HCT116 (cell line): ENCODE measurements at regions of chr2 and their contacts with region 1.

Region 1: DNA sequence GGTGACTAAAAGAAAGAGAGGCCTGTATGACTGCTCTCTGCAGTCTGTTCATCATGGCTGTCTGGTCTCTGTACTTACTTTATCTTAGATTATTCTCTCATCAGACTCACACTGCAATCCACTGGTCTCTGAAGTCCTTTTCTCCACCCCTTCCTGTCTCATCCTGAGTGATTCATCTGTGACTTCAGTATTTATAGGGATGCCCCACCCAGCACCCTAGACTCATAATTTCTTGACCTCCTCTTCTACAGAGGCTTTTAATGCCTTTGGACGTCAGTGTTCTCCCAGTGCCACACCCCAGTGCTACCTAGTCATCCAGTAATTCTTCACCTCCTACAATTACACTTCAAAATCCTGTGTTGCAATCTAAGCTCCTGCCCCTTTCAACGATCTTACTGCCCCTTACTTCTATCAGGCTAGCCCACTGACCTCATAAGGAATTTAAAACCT is 14.9 kb upstream of the ITPRID2 start:
- DNase-seq: peak; percentile 99
- ATAC-seq: peak; percentile 95
- H3K4me3 ChIP-seq: peak overlapping the region; percentile 6 to 21; a peak in 3 of 4 replicates
- H3K27ac ChIP-seq: peak overlapping the region; percentile 91
- H3K4me1 ChIP-seq: peaks cover 32 to 73% of the 10 kb centered on the region in 2 experiments
- H3K27me3 ChIP-seq: no peaks in the 10 kb centered on the region
- CTCF ChIP-seq: no peak
- POLR2A ChIP-seq: no peak
- RAD21 ChIP-seq: peak; percentile 43; the same call in 1 of the 2 replicates

Region 2: DNA sequence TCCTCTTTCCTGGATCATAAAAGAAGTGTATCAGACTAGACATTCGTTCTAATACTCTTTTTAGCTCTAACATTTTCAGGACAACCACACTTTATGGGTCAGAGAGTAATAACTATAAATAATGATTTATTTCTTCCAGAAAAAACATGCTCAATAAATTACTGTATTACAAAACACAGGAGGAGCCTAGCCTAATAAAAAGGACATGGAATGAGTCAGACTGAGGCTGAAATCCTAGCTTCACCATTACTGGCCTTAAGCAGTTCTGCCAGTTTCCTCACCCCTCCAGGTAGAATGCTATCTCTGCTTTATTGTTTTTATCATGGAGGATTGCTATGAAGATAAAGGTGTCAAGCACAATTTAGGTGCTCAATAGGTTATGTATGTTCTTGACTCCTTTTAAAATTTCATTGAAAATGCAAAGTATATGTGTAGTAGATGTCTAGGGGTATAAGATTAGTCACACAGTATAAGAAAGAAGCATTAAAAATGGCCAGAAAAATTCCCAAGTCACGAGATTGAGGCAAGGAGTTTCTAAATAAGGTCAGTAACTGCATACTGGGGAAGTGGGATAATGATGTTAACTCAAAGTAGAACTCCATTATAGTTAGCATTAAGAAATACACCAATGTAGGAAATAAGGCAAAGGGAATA is 90.8 kb before region 1 on chr2:
- CTCF ChIA-PET with region 1: no interaction called
- POLR2A ChIA-PET with region 1: interaction called, 14 read pairs
- RAD21 ChIA-PET with region 1: no interaction called
- intact Hi-C with region 1: loop called (anchors 1 kb)
- DNase-seq: peak; percentile 78
- ATAC-seq: peak; percentile 23; the same call in 1 of the 2 replicates
- H3K4me3 ChIP-seq: no peak overlapping the region
- H3K27ac ChIP-seq: peak overlapping the region; percentile 92
- H3K4me1 ChIP-seq: peaks cover 83 to 100% of the 10 kb centered on the region in 2 experiments
- H3K27me3 ChIP-seq: no peaks in the 10 kb centered on the region
- CTCF ChIP-seq: no peak
- POLR2A ChIP-seq: no peak
- RAD21 ChIP-seq: no peak; the same call in 1 of the 2 replicates

Region 3: DNA sequence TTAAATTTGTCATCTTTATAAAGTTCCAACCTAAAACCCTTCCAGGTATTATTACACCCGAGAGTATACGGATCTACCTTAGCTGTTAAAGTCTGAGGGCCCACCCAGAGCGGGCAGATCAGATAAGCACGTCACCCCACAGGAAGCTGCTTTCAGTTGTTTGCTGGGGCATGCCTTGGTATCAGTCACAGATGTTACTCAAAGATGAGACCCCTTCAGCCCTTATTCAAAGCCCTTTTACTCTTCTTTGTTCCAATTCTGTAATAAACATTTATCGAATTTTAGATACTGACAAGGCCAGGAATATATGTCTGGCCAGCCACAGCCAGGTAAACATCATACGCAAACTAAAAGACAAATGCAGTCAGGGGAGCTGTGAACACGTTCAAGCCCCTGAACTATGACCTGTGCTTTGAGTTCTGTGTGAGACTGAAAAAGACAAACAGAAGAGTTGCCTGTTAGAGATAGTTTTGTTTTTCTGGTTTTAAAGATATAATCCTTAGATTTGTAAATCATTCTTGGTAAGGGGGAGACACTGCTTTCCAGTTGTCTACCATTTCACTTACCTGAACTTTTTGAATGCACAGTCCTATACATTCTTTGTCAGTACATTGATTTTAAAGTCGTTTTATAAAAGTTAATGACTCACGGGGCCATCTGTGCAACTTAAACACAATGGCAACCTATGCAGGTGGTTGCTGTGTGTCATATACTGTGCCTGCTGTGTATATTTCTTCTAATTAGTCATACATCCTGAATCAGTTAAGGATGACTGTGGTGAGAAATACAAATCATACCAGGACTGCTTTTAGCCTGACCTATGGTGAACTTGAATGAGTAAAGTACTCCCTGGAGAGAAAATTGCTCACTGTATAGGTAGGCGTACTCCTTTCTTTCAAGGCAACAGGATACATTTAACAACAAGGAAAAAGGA is 85.7 kb before region 1 on chr2:
- CTCF ChIA-PET with region 1: no interaction called
- POLR2A ChIA-PET with region 1: interaction called, 14 read pairs
- RAD21 ChIA-PET with region 1: no interaction called
- intact Hi-C with region 1: loop called (anchors 1 kb)
- DNase-seq: peak; percentile 98
- ATAC-seq: peak; percentile 87
- H3K4me3 ChIP-seq: peak overlapping the region in 1 of 2 experiments; percentile 14; a peak in 2 of 4 replicates
- H3K27ac ChIP-seq: peak overlapping the region; percentile 92
- H3K4me1 ChIP-seq: peaks cover 54 to 72% of the 10 kb centered on the region in 2 experiments
- H3K27me3 ChIP-seq: no peaks in the 10 kb centered on the region
- CTCF ChIP-seq: no peak
- POLR2A ChIP-seq: no peak
- RAD21 ChIP-seq: peak; percentile 45

Region 4: DNA sequence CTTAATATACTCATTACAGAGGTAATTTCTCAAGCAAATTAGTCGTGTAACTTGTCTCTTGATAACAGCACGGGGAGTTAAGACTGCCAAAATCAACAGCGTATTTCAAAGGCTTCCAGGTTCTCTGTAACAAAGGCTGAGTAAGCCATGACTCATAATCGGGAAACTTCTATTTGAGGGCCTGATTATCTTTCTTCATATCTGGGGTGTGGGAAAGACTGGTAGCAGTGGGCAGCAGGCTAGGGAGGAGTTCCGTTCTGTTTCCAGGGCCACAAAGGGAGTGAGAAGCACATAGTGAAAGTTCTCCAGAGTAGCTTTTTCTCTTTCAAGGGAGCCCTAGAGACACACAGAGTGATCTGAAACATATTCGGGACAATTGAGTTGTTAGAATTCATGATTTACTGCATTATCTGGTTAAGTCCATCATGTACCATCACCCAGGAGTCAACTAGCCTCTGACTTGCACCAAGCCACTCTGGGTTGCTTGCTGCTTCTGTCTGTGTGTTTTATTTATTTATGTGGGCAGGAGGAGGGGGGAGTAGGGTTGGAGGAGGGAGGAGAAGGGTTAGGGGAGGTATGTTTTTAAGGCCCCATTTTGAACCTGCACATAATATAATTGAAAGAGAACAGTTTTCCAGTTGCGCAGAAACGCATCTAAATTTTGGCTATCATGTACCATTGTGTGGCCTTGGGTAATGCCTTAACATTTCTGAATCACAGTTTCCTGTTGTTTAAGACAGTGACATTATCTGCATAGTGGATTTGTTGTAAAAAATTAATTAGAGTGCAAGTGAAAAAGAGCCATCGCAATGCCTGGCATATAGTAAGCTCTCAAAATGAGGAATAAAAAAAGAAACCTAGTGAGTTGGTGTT is 65.6 kb before region 1 on chr2:
- CTCF ChIA-PET with region 1: interaction called, 3 read pairs
- POLR2A ChIA-PET with region 1: interaction called, 20 read pairs
- RAD21 ChIA-PET with region 1: no interaction called
- intact Hi-C with region 1: loop called (anchors 5 kb)
- DNase-seq: peak; percentile 98
- ATAC-seq: peak; percentile 81
- H3K4me3 ChIP-seq: peak overlapping the region in 1 of 2 experiments; percentile 6; a peak in 1 of 4 replicates
- H3K27ac ChIP-seq: peak overlapping the region; percentile 98
- H3K4me1 ChIP-seq: peaks cover 88 to 96% of the 10 kb centered on the region in 2 experiments
- H3K27me3 ChIP-seq: no peaks in the 10 kb centered on the region
- CTCF ChIP-seq: no peak
- POLR2A ChIP-seq: peak; percentile 61
- RAD21 ChIP-seq: peak; percentile 53

Region 5: DNA sequence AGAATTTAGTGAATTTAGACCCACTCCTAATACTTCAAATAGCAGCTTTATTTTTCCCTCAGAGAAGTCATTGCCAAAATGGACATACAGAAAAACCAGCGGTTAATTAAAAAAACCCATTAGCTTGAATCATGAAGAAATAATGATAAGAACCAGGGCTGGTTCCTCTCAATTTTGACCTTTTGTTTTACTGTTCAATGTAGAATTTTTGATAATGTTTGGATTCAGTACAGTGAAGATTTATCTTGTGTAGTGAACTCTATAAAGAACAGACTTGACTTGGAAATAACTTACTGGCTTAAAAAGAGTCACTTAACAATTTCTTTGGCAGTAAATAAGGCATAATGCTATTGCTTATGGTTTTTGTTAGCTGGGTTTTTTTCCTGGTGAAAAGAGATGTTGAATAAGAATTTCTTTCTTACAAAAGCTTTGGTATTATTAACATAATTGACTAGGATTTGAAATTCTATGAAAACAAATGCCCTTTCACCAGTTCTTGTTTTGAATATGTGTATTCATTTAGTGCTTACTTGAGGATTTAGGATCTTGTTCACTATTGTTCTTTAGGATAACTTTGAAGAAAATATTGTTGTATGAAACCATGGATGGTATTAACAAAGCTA is 58.5 kb before region 1 on chr2:
- CTCF ChIA-PET with region 1: no interaction called
- POLR2A ChIA-PET with region 1: interaction called, 10 read pairs
- RAD21 ChIA-PET with region 1: interaction called in 1 of 2 experiments, 5 read pairs
- intact Hi-C with region 1: loop called (anchors 5 kb)
- DNase-seq: no peak
- ATAC-seq: no peak
- H3K4me3 ChIP-seq: no peak overlapping the region
- H3K27ac ChIP-seq: peak overlapping the region; percentile 59; the same call in 1 of the 2 replicates
- H3K4me1 ChIP-seq: peaks cover 67 to 87% of the 10 kb centered on the region in 2 experiments
- H3K27me3 ChIP-seq: no peaks in the 10 kb centered on the region
- CTCF ChIP-seq: no peak
- POLR2A ChIP-seq: no peak
- RAD21 ChIP-seq: no peak

Region 6: GRCh38 chr2:181904022-181904632 is 27.5 kb after region 1 on chr2:
- CTCF ChIA-PET with region 1: no interaction called
- POLR2A ChIA-PET with region 1: interaction called, 32 read pairs
- RAD21 ChIA-PET with region 1: no interaction called
- intact Hi-C with region 1: no loop called
- DNase-seq: no peak
- ATAC-seq: no peak
- H3K4me3 ChIP-seq: no peak overlapping the region
- H3K27ac ChIP-seq: peak overlapping the region; percentile 99
- H3K4me1 ChIP-seq: peaks cover 71 to 98% of the 10 kb centered on the region in 2 experiments
- H3K27me3 ChIP-seq: no peaks in the 10 kb centered on the region
- CTCF ChIP-seq: peak; percentile 24 to 59 (median 30); a peak in 3 of 6 replicates
- POLR2A ChIP-seq: no peak
- RAD21 ChIP-seq: peak; percentile 48

Region 7: GRCh38 chr2:182230561-182230960 is 353.9 kb after region 1 on chr2:
- CTCF ChIA-PET with region 1: no interaction called
- POLR2A ChIA-PET with region 1: no interaction called
- RAD21 ChIA-PET with region 1: no interaction called
- intact Hi-C with region 1: no loop called
- DNase-seq: no peak
- ATAC-seq: no peak
- H3K4me3 ChIP-seq: no peak overlapping the region
- H3K27ac ChIP-seq: no peak overlapping the region
- H3K4me1 ChIP-seq: no peaks in the 10 kb centered on the region
- H3K27me3 ChIP-seq: no peaks in the 10 kb centered on the region
- CTCF ChIP-seq: no peak
- POLR2A ChIP-seq: no peak
- RAD21 ChIP-seq: no peak